OCI-LY7 (cell line): ENCODE measurements at regions of chr6 and their contacts with region 1.

Region 1: DNA sequence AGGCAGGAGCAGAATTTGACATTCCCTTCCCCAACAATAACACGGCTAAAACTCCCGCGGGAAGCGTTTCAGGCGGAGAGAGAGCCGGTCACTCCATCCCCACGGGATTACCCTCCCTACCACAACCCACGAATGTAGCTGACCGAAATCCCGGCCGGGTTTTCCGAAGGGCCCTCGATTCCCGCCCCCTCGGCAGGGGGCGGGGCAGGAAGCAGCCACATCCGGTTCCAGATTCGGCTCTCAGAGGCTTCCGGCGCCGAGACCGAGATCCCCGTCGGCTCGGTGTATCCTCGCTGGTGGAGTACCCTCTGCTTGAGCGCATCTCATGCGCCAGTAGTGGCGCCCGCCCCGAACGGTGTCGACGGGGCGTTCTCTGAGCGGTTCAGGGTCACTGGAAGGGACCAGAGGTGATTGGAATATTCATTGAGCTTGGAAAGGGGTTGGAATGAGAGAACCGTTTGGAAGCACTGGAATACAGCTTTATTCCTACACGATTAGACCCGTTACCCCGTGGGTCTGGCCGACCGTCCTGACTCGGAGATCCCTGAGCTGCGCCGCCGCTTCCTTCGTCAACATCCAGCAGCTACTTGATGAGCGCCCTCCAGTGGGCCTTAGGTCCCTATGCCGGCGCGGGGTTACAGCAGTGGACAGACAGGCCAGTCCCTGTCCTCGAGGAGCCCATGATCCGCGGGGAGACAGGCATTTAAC is 649 bp upstream of the RGL2 start:
- DNase-seq: peak; percentile 96
- H3K4me3 ChIP-seq: peak overlapping the region; percentile 83
- H3K27ac ChIP-seq: peak overlapping the region; percentile 93
- H3K4me1 ChIP-seq: peaks cover 21% of the 10 kb centered on the region
- CTCF ChIP-seq: peak; percentile 78

Region 2: GRCh38 chr6:33271458-33272274 is 27.7 kb before region 1 on chr6 and contains the starts of genes RPS18 and VPS52:
- CTCF ChIA-PET with region 1: interaction called, 12 read pairs
- POLR2A ChIA-PET with region 1: interaction called, 14 read pairs
- intact Hi-C with region 1: no loop called
- DNase-seq: peak; percentile 99
- H3K4me3 ChIP-seq: peak within 1 kb of the TSS; percentile 97
- H3K27ac ChIP-seq: peak within 1 kb of the TSS; percentile 93
- H3K4me1 ChIP-seq: peaks cover 43% of the 10 kb centered on the region
- CTCF ChIP-seq: no peak; the same call in 1 of the 2 replicates
- total RNA-seq, gene RPS18: 7,191 and 8,620 TPM in 2 replicates
- total RNA-seq, gene VPS52: 50.4 and 53.5 TPM in 2 replicates

Region 3: GRCh38 chr6:33276864-33277662 is 22.3 kb before region 1 on chr6 and contains the start of gene B3GALT4:
- CTCF ChIA-PET with region 1: interaction called, 12 read pairs
- POLR2A ChIA-PET with region 1: interaction called, 14 read pairs
- intact Hi-C with region 1: loop called (anchors 1 kb)
- DNase-seq: peak; percentile 83
- H3K4me3 ChIP-seq: peak within 1 kb of the TSS; percentile 97
- H3K27ac ChIP-seq: peak within 1 kb of the TSS; percentile 93
- H3K4me1 ChIP-seq: peaks cover 58% of the 10 kb centered on the region
- CTCF ChIP-seq: peak; percentile 53
- total RNA-seq, gene B3GALT4: 13.1 and 14.2 TPM in 2 replicates

Region 4: GRCh38 chr6:33317669-33318425 is 18.5 kb after region 1 on chr6 and contains the start of gene ZBTB22:
- CTCF ChIA-PET with region 1: no interaction called
- POLR2A ChIA-PET with region 1: interaction called, 9 read pairs
- intact Hi-C with region 1: loop called (anchors 1 kb)
- DNase-seq: peak; percentile 98
- H3K4me3 ChIP-seq: peak within 1 kb of the TSS; percentile 73
- H3K27ac ChIP-seq: peak within 1 kb of the TSS; percentile 79
- H3K4me1 ChIP-seq: peaks cover 55% of the 10 kb centered on the region
- CTCF ChIP-seq: no peak
- total RNA-seq, gene ZBTB22: 17.4 and 21.6 TPM in 2 replicates

Region 5: DNA sequence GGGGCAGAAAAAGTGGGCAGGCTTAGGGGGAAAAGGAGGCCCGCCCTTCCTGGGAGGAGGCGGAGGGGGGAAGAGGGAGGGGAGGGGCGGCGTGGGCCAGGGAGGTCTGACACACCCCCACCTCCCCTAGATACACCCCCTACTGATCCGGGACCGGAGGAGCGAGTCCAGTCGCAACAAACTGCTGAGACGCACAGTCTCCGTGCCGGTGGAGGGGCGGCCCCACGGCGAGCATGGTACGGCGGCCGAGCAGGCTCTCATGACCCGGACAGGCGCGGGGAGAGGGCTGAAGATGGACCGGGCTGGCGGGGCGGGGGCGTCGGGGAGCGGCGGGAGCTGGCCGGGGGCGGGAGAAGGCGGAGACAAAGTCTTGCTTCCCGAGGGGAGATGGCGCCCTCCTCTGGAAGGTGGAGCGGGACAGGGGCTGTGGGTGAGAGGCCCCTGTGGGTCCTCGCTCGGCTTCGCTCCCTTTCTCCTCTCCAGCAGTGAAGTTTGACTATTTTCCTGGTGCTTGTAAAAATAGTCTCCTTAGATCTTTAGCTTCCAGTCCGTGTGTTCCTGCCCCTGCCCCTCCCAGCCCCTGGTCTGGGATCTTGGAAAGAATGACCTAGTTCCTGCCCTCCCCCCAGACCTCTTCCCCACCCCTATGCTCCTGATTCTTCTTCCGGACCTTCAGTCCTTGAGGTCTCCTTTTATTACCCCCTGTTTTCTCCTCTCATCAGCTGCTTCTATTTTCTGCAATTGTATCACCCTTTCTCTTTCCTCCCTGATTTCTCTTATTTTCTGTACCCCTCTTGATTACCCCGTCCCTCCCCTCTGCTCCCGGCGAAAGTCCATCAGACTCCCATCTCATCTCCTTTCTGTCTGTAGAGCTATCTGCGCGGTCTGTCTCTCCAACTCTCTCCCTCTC is 126.5 kb after region 1 on chr6:
- CTCF ChIA-PET with region 1: no interaction called
- POLR2A ChIA-PET with region 1: no interaction called
- intact Hi-C with region 1: loop called (anchors 1 kb)
- DNase-seq: peak; percentile 78
- H3K4me3 ChIP-seq: peak overlapping the region; percentile 67
- H3K27ac ChIP-seq: peak overlapping the region; percentile 58
- H3K4me1 ChIP-seq: peaks cover 51% of the 10 kb centered on the region
- CTCF ChIP-seq: peak; percentile 75